WTC11 (cell line): ENCODE measurements at regions of chr14 and their contacts with region 1.

Region 1: DNA sequence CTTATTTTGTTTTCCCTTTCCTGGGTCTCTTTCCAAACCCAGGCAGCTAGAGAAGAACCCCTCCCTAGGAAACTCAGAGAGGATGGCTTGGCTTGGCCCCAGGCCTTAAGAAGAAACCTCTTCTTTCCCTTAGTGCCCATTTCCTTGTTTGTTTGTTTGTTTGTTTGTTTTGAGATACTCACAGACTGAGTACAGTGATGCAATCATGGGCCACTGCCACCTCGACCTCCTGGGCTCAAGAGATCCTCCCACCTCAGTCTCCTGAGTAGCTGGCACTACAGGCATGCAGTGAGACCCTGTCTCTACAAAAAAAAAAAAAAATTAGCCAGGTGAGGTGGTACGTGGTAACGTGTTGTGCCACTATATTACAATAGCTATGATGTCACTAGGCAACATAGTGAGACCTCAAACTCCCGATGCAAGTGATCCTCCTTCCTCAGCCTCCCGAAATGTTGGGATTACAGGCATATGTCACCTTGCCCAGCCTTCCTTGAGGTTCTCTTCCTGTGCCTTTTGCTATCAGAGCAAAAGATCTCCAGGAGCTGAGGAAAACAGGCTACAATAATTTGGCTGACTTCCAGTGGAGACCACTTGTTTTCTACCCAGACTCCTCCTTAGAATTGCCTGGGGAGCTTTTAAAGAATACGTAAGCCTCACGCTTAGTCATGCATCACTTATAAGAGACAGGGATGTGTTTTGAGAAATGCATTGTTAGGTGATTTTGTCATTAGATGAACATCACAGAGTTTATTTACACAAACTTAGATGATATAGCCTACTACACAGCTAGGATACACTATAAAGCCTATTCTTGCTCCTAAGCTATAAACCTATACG is 34.5 kb upstream of the LGALS3 start:
- DNase-seq: no peak
- ATAC-seq: no peak
- H3K4me3 Mint-ChIP-seq: no peak overlapping the region
- H3K27ac Mint-ChIP-seq: no peak overlapping the region
- H3K4me1 Mint-ChIP-seq: peaks cover 4% of the 10 kb centered on the region
- H3K27me3 Mint-ChIP-seq: no peaks in the 10 kb centered on the region; the same call in 1 of the 2 replicates
- CTCF ChIP-seq: no peak

Region 2: DNA sequence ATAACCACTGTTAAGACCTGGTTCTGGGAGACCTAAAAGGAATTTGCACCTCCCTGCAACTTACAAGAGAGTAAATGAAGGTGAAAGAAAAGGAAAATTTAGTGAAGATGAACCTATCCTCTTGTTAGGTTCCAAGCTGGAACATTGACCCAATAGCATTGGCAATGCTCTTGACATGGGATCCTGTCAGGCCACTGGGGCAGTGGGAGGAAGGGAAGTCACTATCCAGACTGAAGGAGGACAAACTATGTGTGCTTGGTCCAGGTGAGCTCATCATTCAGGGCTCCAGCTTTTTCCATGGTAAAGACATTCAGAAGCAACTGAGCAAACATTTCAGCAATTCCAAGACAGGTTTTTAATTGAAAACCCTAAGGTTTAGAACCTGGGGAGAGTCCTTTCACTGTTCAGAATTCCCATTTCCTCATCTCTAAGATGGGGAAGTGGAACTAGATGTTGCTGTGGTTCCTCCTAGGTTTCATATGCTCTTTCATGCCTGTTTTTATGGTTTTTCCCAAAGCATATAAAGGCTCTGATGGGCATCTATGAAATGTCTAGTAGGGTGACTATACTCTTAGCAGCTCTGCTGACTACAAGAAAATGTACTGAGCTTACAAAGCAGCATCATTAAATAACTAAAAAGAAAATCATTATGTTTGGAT is 10.0 kb before region 1 on chr14:
- CTCF ChIA-PET with region 1: no interaction called
- POLR2A ChIA-PET with region 1: no interaction called
- DNase-seq: no peak
- ATAC-seq: no peak
- H3K4me3 Mint-ChIP-seq: no peak overlapping the region
- H3K27ac Mint-ChIP-seq: no peak overlapping the region
- H3K4me1 Mint-ChIP-seq: no peaks in the 10 kb centered on the region
- H3K27me3 Mint-ChIP-seq: no peaks in the 10 kb centered on the region
- CTCF ChIP-seq: no peak

Region 3: DNA sequence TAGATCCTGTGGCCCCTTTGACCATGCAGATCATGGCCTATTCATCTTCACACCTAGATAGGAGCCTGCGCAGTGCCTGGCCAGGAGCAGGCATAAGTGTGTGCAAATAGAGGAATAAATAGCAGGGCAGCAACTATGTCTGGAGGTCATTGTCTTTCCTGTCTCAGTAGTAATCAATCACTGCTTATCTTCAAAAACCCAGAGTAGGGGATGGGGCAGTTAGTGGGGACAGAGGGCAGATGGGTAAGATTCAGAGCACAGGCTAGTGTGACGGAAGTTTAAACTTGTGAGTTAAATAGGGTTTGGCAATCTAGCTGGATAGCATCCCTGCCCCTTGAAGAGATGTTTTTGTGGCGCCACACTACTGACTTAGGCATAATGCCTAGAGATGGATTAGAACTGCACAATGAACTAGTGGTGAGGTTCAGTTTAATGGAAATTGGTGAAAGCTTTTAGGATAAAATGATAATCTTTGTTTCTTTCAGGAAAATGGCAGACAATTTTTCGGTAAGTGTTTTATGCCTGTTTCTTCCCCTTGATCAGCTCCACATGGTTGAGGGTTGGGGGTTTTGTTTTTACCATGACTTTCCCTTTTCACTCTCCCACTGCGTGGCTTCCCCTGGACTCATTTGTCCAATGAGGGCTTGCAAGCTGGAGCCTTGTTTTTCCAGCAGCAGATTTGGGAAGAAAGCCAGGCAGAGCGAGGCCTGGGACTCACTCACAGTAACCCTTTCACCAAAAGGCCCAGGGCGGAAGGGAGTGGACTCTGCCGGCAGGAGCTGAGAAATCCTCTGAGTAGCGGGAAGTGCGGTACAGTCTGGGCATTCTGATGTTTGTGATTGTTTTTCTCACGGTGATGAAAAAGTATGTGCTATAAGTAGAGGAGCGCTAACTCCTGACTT is 42.6 kb after region 1 on chr14:
- CTCF ChIA-PET with region 1: interaction called, 18 read pairs
- POLR2A ChIA-PET with region 1: no interaction called
- DNase-seq: no peak
- ATAC-seq: no peak
- H3K4me3 Mint-ChIP-seq: no peak overlapping the region
- H3K27ac Mint-ChIP-seq: no peak overlapping the region
- H3K4me1 Mint-ChIP-seq: no peaks in the 10 kb centered on the region
- H3K27me3 Mint-ChIP-seq: no peaks in the 10 kb centered on the region
- CTCF ChIP-seq: no peak

Region 4: DNA sequence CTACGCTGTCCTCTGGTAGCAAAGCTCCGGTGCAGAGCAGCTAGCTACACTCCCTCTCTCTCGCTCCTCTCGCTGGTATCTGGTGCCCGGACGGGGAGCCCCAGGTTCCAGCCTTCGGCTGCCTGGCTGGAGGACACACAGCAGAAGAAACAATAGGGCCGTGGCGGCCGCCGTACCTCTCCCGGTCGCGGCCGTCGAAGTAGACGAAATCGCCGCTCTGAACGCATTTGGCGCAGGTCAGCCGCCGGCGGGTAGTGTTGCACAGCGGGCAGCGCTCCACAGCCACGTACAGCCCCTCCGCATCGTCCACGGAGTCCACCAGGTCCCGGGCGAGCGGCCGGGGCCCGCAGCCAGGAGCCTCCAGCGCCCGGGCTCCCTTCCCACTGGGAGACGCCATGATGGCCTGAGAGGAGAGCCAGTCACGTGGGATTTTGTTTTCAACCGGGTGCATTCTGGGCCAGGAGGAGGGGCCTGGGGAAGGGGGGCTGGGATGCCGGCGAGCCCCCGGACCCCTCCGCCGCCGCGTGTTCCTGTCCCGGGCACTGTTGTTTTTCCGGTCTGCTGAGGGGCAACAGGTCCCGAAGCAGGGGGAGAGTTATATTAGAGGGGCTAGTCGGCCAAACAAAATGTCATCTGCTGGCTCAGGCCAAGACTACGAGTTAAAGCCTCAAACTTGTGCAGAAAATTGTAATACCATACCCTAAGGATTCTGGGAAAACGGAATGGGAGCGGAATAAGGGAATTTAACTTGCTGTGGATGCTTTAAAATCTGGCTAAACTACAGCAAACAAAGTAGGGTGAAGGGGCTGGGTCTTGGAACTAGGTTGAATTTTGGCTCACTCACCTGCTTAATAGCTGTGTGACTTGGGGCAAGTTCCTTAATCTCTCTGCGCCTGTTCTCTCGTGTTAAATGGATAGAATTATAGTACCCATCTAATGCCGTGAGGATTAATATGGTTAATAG is 317.2 kb after region 1 on chr14 and contains the start of gene ATG14:
- CTCF ChIA-PET with region 1: no interaction called
- POLR2A ChIA-PET with region 1: interaction called, 10 read pairs
- DNase-seq: peak; percentile 83
- ATAC-seq: peak; percentile 96
- H3K4me3 Mint-ChIP-seq: peak within 1 kb of the TSS; percentile 90
- H3K27ac Mint-ChIP-seq: peak within 1 kb of the TSS; percentile 98
- H3K4me1 Mint-ChIP-seq: peaks cover 30% of the 10 kb centered on the region
- H3K27me3 Mint-ChIP-seq: peaks cover 5% of the 10 kb centered on the region; the same call in 1 of the 2 replicates
- CTCF ChIP-seq: no peak
- total RNA-seq, gene ATG14: 9.1 to 10.4 TPM (median 9.4 TPM) in 3 replicates

Region 5: GRCh38 chr14:55482936-55483605 is 388.5 kb after region 1 on chr14:
- CTCF ChIA-PET with region 1: no interaction called
- POLR2A ChIA-PET with region 1: no interaction called
- DNase-seq: no peak
- ATAC-seq: no peak
- H3K4me3 Mint-ChIP-seq: no peak overlapping the region
- H3K27ac Mint-ChIP-seq: no peak overlapping the region
- H3K4me1 Mint-ChIP-seq: peaks cover 3% of the 10 kb centered on the region; the same call in 1 of the 2 replicates
- H3K27me3 Mint-ChIP-seq: no peaks in the 10 kb centered on the region
- CTCF ChIP-seq: no peak